ENCODE measurements at regions of chr22 and their contacts with region 1.

Region 1: GRCh38 chr22:30423982-30424963 is 1.3 kb upstream of the MTFP1 start:
- DNase-seq: peak; percentile 98 to 100
- H3K4me3 ChIP-seq: peak overlapping the region; percentile 57 to 86
- H3K27ac ChIP-seq: peak overlapping the region; percentile 98
- H3K4me1 ChIP-seq: peaks cover 14 to 35% of the 10 kb centered on the region in 2 donors
- H3K27me3 ChIP-seq: no peaks in the 10 kb centered on the region
- CTCF ChIP-seq: no peak

Region 2: DNA sequence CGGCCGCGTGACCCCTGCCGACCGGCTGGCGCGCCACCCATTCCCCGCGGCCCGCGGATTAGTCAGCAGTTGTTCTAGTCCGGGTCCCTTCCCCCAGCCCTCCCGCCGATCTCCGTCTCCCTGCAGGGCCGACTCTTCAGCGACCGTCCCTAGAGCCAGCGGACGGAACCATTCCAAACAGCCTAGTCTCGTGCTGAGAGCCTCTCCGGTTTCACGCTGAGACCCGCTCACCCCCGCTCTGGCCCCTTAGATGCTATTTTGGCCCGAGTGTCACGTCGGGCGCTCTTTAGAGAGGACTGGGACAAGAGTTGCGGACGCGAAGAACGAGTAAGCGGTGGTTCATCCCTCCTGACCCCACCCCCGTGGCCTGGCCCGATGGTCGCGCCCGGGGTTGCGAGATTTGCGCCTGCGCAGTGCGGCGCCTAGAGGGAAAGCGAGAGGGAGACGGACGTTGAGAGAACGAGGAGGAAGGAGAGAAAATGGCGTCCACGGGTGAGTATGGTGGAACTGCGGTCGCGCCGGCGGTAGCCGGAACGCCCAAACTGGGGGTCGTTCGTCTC is 1156.3 kb before region 1 on chr22 and contains the starts of genes EWSR1 and RHBDD3:
- intact Hi-C with region 1: loop called (anchors 5 kb)
- DNase-seq: peak; percentile 88 to 97
- H3K4me3 ChIP-seq: peak within 1 kb of the TSS; percentile 76 to 98
- H3K27ac ChIP-seq: peak within 1 kb of the TSS; percentile 96 to 99
- H3K4me1 ChIP-seq: peaks cover 6 to 46% of the 10 kb centered on the region in 2 donors
- H3K27me3 ChIP-seq: no peaks in the 10 kb centered on the region
- CTCF ChIP-seq: no peak
- total RNA-seq, gene EWSR1: 133 TPM
- total RNA-seq, gene RHBDD3: 254 TPM

Region 3: GRCh38 chr22:30289134-30289979 is 134.9 kb before region 1 on chr22 and contains the start of gene CASTOR1:
- intact Hi-C with region 1: loop called (anchors 1 kb)
- DNase-seq: peak; percentile 96 to 99
- H3K4me3 ChIP-seq: peak within 1 kb of the TSS; percentile 74 to 94
- H3K27ac ChIP-seq: peak within 1 kb of the TSS; percentile 94 to 96
- H3K4me1 ChIP-seq: peaks cover 19 to 33% of the 10 kb centered on the region in 2 donors
- H3K27me3 ChIP-seq: no peaks in the 10 kb centered on the region
- CTCF ChIP-seq: no peak
- total RNA-seq, gene CASTOR1: 55.9 TPM

Region 4: DNA sequence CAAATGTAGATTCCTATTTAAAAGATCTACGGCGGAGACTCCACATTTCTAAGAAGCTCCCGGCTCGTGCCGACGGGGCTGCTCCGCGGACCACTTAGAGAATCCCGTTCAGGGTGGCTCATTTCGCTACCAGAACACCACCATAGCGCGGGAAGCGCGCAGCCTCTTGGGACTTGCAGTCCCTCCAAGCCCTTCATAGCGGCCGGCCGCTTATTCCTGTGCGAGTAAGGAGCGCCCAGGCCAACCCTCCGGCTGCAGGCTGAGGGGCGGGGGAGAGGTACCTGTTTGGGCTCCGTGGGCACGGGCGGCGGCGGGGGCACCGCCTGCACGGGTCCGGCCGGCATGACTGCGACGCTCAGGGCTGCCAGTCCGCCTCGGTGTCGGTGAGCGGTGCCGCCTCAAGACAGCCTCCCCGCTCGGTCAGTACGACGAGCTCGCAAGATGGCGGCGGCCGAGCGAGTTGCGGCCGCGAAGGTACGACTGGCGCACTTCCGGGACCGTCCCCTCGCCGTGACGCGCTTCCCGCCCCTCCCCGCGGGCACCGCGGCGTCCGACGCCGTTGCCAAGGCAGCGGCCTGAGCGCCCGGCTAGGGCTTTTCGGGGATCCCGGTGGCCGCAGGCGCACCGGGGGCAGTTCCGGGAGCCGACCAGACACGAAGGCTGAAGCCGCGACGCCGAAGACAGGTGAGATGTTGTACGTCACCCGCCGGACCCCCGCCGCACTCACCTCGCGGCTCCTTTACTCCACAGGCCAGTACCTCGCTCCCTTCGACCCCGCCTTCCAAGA is 67.6 kb before region 1 on chr22 and contains the starts of genes CCDC157 and SF3A1:
- intact Hi-C with region 1: loop called (anchors 1 kb)
- DNase-seq: peak; percentile 39 to 92
- H3K4me3 ChIP-seq: peak within 1 kb of the TSS; percentile 75 to 97
- H3K27ac ChIP-seq: peak within 1 kb of the TSS; percentile 92 to 99
- H3K4me1 ChIP-seq: peaks cover 11 to 24% of the 10 kb centered on the region in 2 donors
- H3K27me3 ChIP-seq: no peaks in the 10 kb centered on the region
- CTCF ChIP-seq: no peak
- total RNA-seq, gene CCDC157: 7.0 TPM
- total RNA-seq, gene SF3A1: 92.9 TPM

Region 5: DNA sequence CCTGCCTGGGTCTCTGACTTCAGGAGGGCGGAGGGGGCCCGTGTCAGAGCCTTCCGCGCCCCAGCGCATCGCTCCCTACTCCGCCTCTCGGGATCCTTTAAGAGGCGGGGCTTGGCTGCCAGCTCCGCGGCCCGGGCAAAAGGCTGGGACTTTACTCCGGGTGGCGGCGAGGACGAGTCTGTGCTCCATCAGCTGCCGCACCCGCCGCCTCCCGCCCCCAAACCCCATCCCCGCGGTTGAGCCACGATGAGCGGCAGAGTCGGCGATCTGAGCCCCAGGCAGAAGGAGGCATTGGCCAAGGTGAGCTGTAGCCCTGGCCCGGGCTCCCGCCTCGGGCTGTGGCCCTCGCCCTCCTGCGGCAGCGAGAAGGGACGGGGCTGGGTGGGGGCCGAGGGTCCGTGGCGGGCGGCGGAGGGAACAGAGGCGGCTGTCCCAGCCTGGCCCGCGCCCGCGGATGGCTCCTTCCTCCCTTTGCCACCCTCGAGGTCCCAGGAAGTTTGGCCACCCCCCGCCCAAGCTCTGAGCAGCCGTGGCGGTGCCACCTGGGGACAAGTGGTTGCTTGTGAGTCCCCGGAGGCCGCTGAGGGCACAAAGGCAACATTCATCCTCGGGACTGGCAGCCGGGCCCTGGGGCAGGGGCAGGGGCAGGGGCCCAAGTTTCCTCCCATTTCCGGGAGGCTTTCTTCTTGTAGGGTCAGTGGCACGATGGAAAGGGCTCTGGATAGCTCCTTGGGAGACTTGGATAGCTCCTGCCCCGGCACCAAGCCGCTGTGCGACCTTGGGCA is 27.2 kb before region 1 on chr22 and contains the start of gene SEC14L2:
- intact Hi-C with region 1: loop called (anchors 1 kb)
- DNase-seq: peak in 1 of 2 donors; percentile 85
- H3K4me3 ChIP-seq: peak within 1 kb of the TSS; percentile 71 to 97
- H3K27ac ChIP-seq: peak within 1 kb of the TSS; percentile 38 to 80
- H3K4me1 ChIP-seq: peaks cover 0 to 3% of the 10 kb centered on the region in 2 donors
- H3K27me3 ChIP-seq: no peaks in the 10 kb centered on the region
- CTCF ChIP-seq: no peak
- total RNA-seq, gene SEC14L2: 3.0 TPM

Region 6: DNA sequence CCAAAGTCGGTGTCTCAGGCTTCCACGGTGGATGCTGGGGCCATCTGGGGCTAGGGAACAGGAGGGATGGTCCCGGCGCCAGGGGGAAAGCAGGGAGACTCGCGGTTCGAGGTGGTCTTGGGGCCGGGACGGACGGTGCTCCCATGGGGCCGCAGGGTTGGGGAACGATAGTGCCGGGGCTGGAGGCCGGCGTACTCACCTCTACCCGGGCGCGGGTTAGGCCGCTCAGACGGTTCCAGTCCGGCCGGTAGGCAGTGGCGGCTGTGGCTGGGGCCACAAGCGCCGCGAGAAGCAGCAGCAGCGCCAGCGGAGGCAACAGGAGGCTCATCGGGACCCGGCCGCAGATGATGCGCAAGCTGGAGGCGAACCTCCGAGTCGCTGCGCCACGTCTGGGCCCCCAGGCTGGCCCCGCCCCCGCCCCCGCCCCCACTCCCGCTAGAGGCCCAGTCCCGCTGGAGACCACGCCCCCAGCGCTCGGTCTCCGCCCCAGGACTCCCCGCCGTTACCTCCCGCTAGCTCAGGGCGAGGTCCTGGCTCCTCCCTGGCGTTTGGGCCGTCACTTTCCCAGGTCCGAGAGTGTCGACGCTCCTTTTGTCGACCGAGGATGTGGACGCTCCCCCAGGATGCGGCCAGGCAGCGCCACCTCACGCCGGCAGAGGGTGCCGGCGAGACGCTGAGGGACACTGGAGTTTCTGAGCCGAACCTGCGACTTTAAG is 683.1 kb after region 1 on chr22 and contains the start of gene SELENOM:
- intact Hi-C with region 1: loop called (anchors 10 kb)
- DNase-seq: peak; percentile 88 to 99
- H3K4me3 ChIP-seq: peak within 1 kb of the TSS; percentile 87 to 94
- H3K27ac ChIP-seq: peak within 1 kb of the TSS; percentile 98 to 99
- H3K4me1 ChIP-seq: peaks cover 0 to 35% of the 10 kb centered on the region in 2 donors
- H3K27me3 ChIP-seq: no peaks in the 10 kb centered on the region
- CTCF ChIP-seq: peak; percentile 97 to 99 (median 98)
- total RNA-seq, gene SELENOM: 1,262 TPM

Measured in ascending aorta (tissue), 2 donors.